HEK293 (cell line): ENCODE measurements at regions of chr17 and their contacts with region 1.

Region 1: DNA sequence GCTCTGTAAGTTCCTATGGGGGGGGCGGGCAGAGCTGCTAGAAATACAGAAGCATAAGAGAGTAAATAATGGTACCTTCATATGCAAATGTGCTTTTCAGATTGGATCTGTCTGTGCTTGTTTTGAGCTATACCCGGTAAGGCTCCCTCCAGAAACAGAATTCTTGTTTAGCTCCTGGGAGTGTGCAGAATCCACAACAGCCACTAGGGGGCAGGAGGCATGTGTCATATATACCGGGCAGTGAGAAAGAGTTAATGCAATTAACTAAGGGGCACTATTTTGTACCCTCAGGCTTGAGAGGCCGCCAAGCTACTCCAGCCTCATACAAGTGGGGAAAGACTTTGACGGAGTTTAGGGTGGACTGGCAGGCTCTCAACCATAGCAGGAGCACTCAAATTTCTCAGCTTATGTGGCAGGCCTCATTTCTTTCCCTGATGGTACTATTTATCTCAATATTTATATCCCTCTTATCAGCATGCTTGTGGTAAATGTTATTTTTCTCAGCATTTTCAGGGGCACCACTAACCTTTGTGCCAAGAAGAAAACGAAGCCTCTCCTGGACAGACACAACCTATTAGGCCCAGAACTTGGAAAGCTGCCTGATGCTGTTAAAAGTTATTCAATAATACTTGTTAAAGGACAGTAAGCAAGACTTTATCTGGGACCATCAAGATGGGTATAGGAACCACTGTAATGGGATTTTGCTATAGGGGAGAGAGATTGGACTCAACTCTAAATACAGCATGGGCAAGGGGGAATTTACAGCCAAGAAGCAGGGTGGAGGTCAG is 10.7 kb upstream of the CENPV start:
- H3K4me3 ChIP-seq: no peak overlapping the region
- H3K27ac ChIP-seq: no peak overlapping the region
- H3K4me1 ChIP-seq: peaks cover 4% of the 10 kb centered on the region
- CTCF ChIP-seq: peak; percentile 80

Region 2: GRCh38 chr17:16304830-16305229 is 59.1 kb before region 1 on chr17:
- CTCF ChIA-PET with region 1: interaction called, 13 read pairs
- POLR2A ChIA-PET with region 1: no interaction called
- H3K4me3 ChIP-seq: no peak overlapping the region
- H3K27ac ChIP-seq: no peak overlapping the region
- H3K4me1 ChIP-seq: no peaks in the 10 kb centered on the region
- CTCF ChIP-seq: peak; percentile 73

Region 3: GRCh38 chr17:16339937-16340336 is 24.0 kb before region 1 on chr17:
- CTCF ChIA-PET with region 1: interaction called, 10 read pairs
- POLR2A ChIA-PET with region 1: interaction called, 4 read pairs
- H3K4me3 ChIP-seq: no peak overlapping the region
- H3K27ac ChIP-seq: no peak overlapping the region
- H3K4me1 ChIP-seq: no peaks in the 10 kb centered on the region
- CTCF ChIP-seq: no peak

Region 4: GRCh38 chr17:16380640-16381495 is 16.9 kb after region 1 on chr17 and contains the start of gene UBB:
- CTCF ChIA-PET with region 1: interaction called, 93 read pairs
- POLR2A ChIA-PET with region 1: interaction called, 83 read pairs
- H3K4me3 ChIP-seq: peak within 1 kb of the TSS; percentile 67
- H3K27ac ChIP-seq: peak within 1 kb of the TSS; percentile 100
- H3K4me1 ChIP-seq: peaks cover 10% of the 10 kb centered on the region; the same call in 1 of the 2 replicates
- CTCF ChIP-seq: peak; percentile 72

Region 5: GRCh38 chr17:16428098-16428882 is 64.3 kb after region 1 on chr17:
- CTCF ChIA-PET with region 1: interaction called, 11 read pairs
- POLR2A ChIA-PET with region 1: no interaction called
- H3K4me3 ChIP-seq: no peak overlapping the region
- H3K27ac ChIP-seq: no peak overlapping the region
- H3K4me1 ChIP-seq: no peaks in the 10 kb centered on the region
- CTCF ChIP-seq: peak; percentile 84

Region 6: DNA sequence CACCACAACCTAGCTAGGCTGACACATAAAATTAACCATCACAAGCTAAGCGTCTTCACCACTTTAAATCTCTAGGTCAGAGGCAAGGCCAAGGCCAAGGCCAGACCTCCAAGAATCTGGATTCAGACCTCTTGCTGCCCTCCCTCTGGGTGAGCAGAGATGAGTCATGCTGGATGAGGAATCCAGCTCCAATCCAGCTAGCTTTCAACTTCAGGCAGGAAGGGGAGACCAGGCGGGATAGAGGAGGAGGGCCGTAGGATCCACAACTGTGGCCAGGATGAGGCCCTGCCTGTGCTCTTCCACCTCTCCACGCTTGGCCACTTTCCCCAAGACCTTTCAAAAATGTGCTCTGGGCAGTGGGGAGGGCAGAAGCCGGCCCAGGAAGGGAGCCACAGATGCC is 113.3 kb after region 1 on chr17:
- CTCF ChIA-PET with region 1: no interaction called
- POLR2A ChIA-PET with region 1: no interaction called
- H3K4me3 ChIP-seq: no peak overlapping the region
- H3K27ac ChIP-seq: no peak overlapping the region
- H3K4me1 ChIP-seq: no peaks in the 10 kb centered on the region
- CTCF ChIP-seq: no peak

Region 7: DNA sequence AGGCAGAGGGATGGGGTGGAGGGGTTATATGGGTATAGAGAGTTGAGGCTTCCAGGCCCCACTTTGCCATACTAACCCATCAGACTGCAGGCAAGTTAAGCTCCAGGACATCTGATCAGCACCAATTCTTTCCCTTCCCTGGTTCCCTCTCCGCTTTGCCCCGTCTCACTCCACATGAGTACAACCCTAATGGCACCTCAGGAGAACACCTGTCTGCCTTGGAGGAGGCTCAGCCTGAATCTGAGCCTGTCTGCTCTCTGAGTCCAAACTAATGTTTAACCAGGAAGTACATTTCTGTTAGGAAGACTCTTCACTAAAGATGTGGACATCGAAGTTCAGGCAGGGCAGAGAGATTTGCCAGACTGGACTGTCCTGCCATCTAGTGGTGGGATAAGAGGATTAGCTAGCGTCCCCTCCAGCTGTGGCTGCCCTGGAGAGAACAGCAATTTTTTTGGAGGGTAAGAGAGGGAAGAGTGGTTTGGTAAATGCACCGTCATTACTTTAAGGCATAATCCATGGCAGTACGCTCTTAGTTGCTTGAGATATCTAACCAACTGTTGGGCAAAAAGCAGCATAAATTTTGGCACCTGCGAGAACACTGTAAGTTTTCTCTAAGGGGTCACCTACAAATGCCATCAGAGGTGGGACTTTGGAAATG is 157.3 kb after region 1 on chr17:
- CTCF ChIA-PET with region 1: interaction called, 51 read pairs
- POLR2A ChIA-PET with region 1: no interaction called
- H3K4me3 ChIP-seq: no peak overlapping the region
- H3K27ac ChIP-seq: no peak overlapping the region
- H3K4me1 ChIP-seq: peaks cover 3% of the 10 kb centered on the region; the same call in 1 of the 2 replicates
- CTCF ChIP-seq: peak; percentile 80